ENCODE measurements at regions of chr10 and their contacts with region 1.

Region 1: DNA sequence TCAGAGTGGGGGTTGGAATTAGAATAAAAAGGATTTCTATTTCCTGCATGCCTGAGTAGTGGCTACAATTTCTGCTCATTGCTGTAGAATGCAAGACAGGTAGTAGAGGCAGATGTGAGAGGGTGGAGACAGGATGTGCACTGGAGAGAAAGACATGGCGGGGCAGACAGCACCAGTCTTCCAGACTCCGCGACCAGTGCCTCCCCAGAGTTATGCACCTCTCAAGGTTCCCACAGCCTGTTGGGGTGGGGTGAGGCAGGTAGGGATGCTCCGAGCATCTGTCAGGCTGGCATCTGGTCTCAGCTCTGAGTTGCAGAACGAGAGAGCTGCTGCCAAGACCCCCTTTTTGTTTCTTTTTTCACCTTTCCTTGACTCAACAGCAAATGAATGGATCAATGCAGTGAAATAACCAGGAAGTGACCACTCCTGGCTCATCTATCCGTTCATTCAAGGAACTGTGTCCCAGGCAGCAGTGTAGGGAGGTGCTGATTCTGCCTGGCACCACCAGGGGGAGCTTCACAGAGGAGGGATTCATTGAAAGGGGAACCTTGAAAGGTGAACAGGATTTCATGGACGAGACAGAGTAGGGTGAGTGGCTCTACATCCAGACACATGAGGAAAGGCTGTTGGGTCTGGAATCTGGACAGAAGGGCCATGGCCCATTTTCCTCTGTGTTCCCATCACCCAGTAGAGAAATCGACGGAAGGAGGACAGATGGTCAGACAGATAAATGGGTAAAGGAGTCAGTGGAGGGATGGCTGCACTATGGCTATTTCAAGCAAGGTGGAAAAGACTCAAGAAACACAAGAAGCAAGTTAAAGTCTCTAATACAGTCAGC is 17.2 kb upstream of the SLC18A3 start:
- DNase-seq: no peak
- ATAC-seq: peak; percentile 65 to 72

Region 2: GRCh38 chr10:49474901-49475300 is 118.0 kb before region 1 on chr10:
- intact Hi-C with region 1: no loop called
- DNase-seq: no peak
- ATAC-seq: no peak

Region 3: GRCh38 chr10:49518982-49519578 is 73.9 kb before region 1 on chr10:
- intact Hi-C with region 1: no loop called
- DNase-seq: no peak
- ATAC-seq: peak; percentile 47 to 63

Region 4: GRCh38 chr10:49649294-49649693 is 56.3 kb after region 1 on chr10:
- intact Hi-C with region 1: no loop called
- DNase-seq: no peak
- ATAC-seq: no peak

Region 5: GRCh38 chr10:49783645-49784044 is 190.7 kb after region 1 on chr10:
- intact Hi-C with region 1: loop called in 1 of 2 experiments (anchors 10 kb)
- DNase-seq: no peak
- ATAC-seq: no peak

Region 6: GRCh38 chr10:49844821-49845597 is 252.1 kb after region 1 on chr10:
- intact Hi-C with region 1: no loop called
- DNase-seq: no peak
- ATAC-seq: no peak

Region 7: GRCh38 chr10:50224330-50224952 is 631.5 kb after region 1 on chr10:
- intact Hi-C with region 1: loop called (anchors 5 kb)
- DNase-seq: no peak
- ATAC-seq: peak; percentile 44 to 68